Prostate gland (tissue), 2 donors: ENCODE measurements at regions of chr14 and their contacts with region 1.

Region 1: DNA sequence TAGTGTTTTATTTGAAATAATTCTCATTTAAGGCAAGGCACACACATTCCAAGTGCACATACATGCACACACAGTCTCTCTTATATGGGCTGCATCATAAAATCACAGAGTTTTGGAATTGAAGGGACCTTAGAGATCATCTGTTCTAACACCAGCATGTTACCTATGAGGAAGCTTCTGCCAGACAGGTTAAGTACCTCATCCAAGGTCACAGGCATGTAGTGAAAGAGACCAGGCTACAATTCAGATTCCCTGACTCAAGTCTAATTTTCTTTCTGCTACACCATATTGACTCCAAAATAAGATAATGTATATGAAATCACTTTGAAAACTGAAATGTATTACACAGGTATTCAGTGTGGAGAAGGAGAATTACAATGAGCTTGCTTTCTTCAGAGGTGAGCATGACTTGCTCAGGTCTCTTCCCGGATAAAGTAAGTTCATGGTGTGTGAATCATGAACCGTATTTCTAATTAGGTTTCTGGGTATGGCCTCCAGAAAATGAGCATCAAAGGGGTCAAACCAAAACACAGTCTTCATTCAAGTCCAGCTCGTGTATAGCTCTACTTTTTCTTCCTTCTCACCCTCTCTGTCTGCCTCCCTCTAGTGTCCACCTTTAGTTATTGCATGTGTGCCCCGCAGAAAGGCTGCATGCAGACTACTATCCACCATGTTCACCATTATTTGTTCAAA is 411.9 kb downstream of the FUT8 start:
- DNase-seq: peak; percentile 40
- H3K4me3 ChIP-seq: no peak overlapping the region
- H3K27ac ChIP-seq: no peak overlapping the region
- H3K4me1 ChIP-seq: no peaks in the 10 kb centered on the region
- H3K27me3 ChIP-seq: no peaks in the 10 kb centered on the region
- CTCF ChIP-seq: peak; percentile 73 to 85 (median 81)
- POLR2A ChIP-seq: no peak

Region 2: DNA sequence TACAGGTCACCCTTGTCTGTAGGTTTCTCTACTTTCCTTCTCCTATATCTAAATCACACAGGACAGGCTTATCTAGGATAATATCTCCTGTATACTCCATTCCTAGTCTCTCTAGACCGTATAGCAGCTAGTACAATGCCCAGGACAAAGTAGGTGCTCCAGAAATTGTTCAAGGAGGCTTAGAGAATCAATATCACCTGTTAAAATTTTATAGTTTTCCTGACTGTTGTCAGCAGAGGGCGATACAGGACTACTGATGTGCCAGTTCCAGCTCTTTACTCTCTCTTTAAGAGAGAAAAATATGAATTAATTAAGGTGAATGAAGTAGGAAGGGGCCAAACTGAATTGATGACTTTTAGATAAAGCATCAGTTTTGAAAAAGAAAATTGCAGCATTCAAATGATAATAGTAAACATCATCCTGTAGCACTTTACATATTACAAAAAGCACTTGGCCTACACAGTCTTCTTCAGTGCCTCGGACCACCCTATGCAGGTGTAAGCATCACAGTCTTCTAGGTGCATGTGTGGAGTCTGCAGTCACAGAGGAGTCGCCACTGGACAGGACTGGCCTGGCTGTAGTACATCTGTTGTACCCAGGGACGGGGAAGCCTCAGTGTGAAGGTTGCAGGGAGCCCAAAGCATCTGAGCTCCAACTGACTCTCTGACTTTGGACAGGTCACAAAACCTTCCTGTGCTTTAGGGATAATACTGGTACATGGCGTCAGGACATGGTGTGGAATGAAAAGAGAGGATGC is 660.2 kb before region 1 on chr14:
- intact Hi-C with region 1: loop called (anchors 10 kb)
- DNase-seq: peak; percentile 32
- H3K4me3 ChIP-seq: no peak overlapping the region
- H3K27ac ChIP-seq: no peak overlapping the region
- H3K4me1 ChIP-seq: no peaks in the 10 kb centered on the region
- H3K27me3 ChIP-seq: no peaks in the 10 kb centered on the region
- CTCF ChIP-seq: peak in 3 of 4 experiments; percentile 65 to 78 (median 65)
- POLR2A ChIP-seq: no peak

Region 3: GRCh38 chr14:65412032-65412846 is 412.2 kb before region 1 on chr14 and contains the start of gene FUT8:
- intact Hi-C with region 1: loop called (anchors 2 kb)
- DNase-seq: peak; percentile 95
- H3K4me3 ChIP-seq: peak within 1 kb of the TSS; percentile 61 to 81
- H3K27ac ChIP-seq: peak within 1 kb of the TSS; percentile 86 to 91
- H3K4me1 ChIP-seq: no peaks in the 10 kb centered on the region
- H3K27me3 ChIP-seq: no peaks in the 10 kb centered on the region
- CTCF ChIP-seq: peak in 3 of 4 experiments; percentile 65 to 81 (median 68)
- POLR2A ChIP-seq: peak; percentile 80
- total RNA-seq, gene FUT8: 12.4 to 27.9 TPM

Region 4: GRCh38 chr14:65879248-65880009 is 55.0 kb after region 1 on chr14:
- intact Hi-C with region 1: no loop called
- DNase-seq: no peak
- H3K4me3 ChIP-seq: no peak overlapping the region
- H3K27ac ChIP-seq: no peak overlapping the region
- H3K4me1 ChIP-seq: no peaks in the 10 kb centered on the region
- H3K27me3 ChIP-seq: no peaks in the 10 kb centered on the region
- CTCF ChIP-seq: no peak
- POLR2A ChIP-seq: no peak